ENCODE measurements at regions of chrX and their contacts with region 1.

Region 1: DNA sequence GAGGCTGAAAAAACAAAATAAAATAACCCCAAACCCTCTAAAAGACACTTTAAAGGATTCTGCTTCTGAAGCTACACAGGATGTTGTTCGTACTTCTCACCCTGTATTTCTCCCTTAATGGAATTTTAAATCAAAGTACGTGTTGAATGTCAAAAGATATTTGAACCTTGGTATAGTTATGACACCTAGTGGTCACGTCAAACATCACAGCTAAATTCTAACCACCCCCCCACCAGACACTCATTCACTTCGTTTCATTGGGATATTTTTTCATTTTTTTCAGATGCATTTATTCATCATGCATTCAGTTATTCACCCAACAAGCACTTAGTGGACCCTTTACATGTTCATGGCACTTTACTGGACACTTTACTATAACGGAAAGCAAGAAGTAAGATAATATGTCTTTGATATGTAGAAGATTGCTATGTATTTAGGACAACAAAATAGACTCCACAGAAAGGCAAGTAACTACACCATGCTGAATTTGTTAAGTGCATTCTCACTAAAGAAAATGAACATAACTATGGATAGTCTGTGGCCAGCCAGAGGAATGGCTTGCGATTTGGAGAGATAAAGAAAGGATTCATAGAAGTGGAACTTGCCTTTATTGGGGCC is 62.5 kb upstream of the GPR174 start:
- DNase-seq: peak; percentile 61
- ATAC-seq: peak; percentile 87
- H3K4me3 ChIP-seq: no peak overlapping the region
- H3K27ac ChIP-seq: no peak overlapping the region
- H3K4me1 ChIP-seq: no peaks in the 10 kb centered on the region
- H3K27me3 ChIP-seq: no peaks in the 10 kb centered on the region
- CTCF ChIP-seq: peak; percentile 54 to 82 (median 63); a peak in 5 of 6 replicates
- EP300 ChIP-seq: no peak
- POLR2A ChIP-seq: no peak
- RAD21 ChIP-seq: peak; percentile 83

Region 2: GRCh38 chrX:78455901-78456300 is 626.1 kb before region 1 on chrX:
- CTCF ChIA-PET with region 1: no interaction called
- POLR2A ChIA-PET with region 1: no interaction called
- RAD21 ChIA-PET with region 1: no interaction called
- SMC1A ChIA-PET with region 1: no interaction called
- in situ Hi-C with region 1: no loop called
- intact Hi-C with region 1: no loop called
- DNase-seq: no peak
- ATAC-seq: no peak
- H3K4me3 ChIP-seq: no peak overlapping the region
- H3K27ac ChIP-seq: no peak overlapping the region
- H3K4me1 ChIP-seq: no peaks in the 10 kb centered on the region
- H3K27me3 ChIP-seq: no peaks in the 10 kb centered on the region
- CTCF ChIP-seq: no peak
- EP300 ChIP-seq: no peak
- POLR2A ChIP-seq: no peak
- RAD21 ChIP-seq: no peak

Region 3: GRCh38 chrX:78595901-78596502 is 486.0 kb before region 1 on chrX:
- CTCF ChIA-PET with region 1: interaction called, 39 read pairs
- POLR2A ChIA-PET with region 1: no interaction called
- RAD21 ChIA-PET with region 1: interaction called, 19 read pairs
- SMC1A ChIA-PET with region 1: interaction called, 41 read pairs
- in situ Hi-C with region 1: no loop called
- intact Hi-C with region 1: loop called (anchors 1 kb)
- DNase-seq: no peak
- ATAC-seq: peak; percentile 45; the same call in 2 of the 3 replicates
- H3K4me3 ChIP-seq: no peak overlapping the region
- H3K27ac ChIP-seq: no peak overlapping the region
- H3K4me1 ChIP-seq: no peaks in the 10 kb centered on the region
- H3K27me3 ChIP-seq: no peaks in the 10 kb centered on the region
- CTCF ChIP-seq: peak in 1 of 3 experiments; percentile 18; a peak in 1 of 6 replicates
- EP300 ChIP-seq: no peak
- POLR2A ChIP-seq: no peak
- RAD21 ChIP-seq: peak; percentile 58

Region 4: DNA sequence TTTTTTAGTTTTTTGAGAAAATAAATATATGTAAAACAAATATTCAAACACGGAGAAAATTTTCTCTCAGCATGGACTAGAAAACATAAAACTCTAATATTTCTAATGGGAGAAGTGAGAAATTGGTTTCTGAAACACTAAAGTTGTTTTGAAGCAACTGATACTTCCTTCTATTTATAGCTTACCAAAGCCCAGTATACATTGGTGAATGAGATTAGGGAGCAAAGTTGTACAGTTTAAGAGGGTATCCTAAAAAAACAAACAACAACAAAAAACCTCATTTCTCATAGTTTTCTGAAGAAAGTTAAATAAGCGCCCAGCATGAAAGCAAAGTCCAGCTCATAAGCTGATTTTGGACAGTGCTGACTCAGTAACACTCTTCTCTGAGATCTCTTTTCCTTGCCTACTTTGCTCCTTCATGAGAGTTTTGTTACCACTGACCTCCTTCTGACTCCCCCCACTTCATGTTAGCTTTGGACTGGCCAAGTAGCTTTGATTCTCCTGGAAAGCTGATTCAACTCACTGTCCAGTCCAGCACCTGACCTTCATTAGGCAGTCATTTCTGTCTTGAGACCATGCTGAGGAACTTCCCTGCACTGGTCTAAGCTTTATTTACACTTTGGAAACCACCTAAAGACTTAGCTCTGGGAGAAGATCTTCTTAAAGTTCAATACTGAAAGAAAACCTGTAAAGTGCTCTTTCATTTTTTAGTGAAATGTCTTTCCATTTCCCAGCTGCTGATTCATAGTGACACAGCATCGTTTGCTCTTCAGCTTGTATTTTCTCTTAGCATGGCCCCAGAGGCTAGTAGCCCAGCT is 158.6 kb before region 1 on chrX:
- CTCF ChIA-PET with region 1: interaction called, 6 read pairs
- POLR2A ChIA-PET with region 1: interaction called, 6 read pairs
- RAD21 ChIA-PET with region 1: interaction called, 19 read pairs
- SMC1A ChIA-PET with region 1: interaction called, 33 read pairs
- in situ Hi-C with region 1: no loop called
- intact Hi-C with region 1: no loop called
- DNase-seq: peak; percentile 87
- ATAC-seq: peak; percentile 95
- H3K4me3 ChIP-seq: peak overlapping the region; percentile 49
- H3K27ac ChIP-seq: peak overlapping the region; percentile 99
- H3K4me1 ChIP-seq: peaks cover 9% of the 10 kb centered on the region
- H3K27me3 ChIP-seq: no peaks in the 10 kb centered on the region
- CTCF ChIP-seq: no peak
- EP300 ChIP-seq: peak; percentile 68 to 72; a peak in 2 of 4 replicates
- POLR2A ChIP-seq: no peak; the same call in 1 of the 2 replicates
- RAD21 ChIP-seq: 0 out of 2 replicates have a peak, but pooled peaks have one; percentile 3

Region 5: GRCh38 chrX:79107891-79108718 is 26.1 kb after region 1 on chrX:
- CTCF ChIA-PET with region 1: interaction called, 4 read pairs
- POLR2A ChIA-PET with region 1: no interaction called
- RAD21 ChIA-PET with region 1: interaction called, 27 read pairs
- SMC1A ChIA-PET with region 1: interaction called, 43 read pairs
- in situ Hi-C with region 1: no loop called
- intact Hi-C with region 1: no loop called
- DNase-seq: peak; percentile 55
- ATAC-seq: peak; percentile 91
- H3K4me3 ChIP-seq: no peak overlapping the region
- H3K27ac ChIP-seq: peak overlapping the region; percentile 24
- H3K4me1 ChIP-seq: peaks cover 8% of the 10 kb centered on the region; the same call in 1 of the 2 replicates
- H3K27me3 ChIP-seq: no peaks in the 10 kb centered on the region
- CTCF ChIP-seq: no peak
- EP300 ChIP-seq: peak; percentile 58 to 80; a peak in 2 of 4 replicates
- POLR2A ChIP-seq: no peak
- RAD21 ChIP-seq: no peak

Region 6: GRCh38 chrX:79182616-79183015 is 100.6 kb after region 1 on chrX:
- CTCF ChIA-PET with region 1: no interaction called
- POLR2A ChIA-PET with region 1: no interaction called
- RAD21 ChIA-PET with region 1: interaction called, 11 read pairs
- SMC1A ChIA-PET with region 1: interaction called, 3 read pairs
- in situ Hi-C with region 1: no loop called
- intact Hi-C with region 1: no loop called
- DNase-seq: peak; percentile 84
- ATAC-seq: peak; percentile 93
- H3K4me3 ChIP-seq: no peak overlapping the region
- H3K27ac ChIP-seq: peak overlapping the region; percentile 57
- H3K4me1 ChIP-seq: peaks cover 12% of the 10 kb centered on the region; the same call in 1 of the 2 replicates
- H3K27me3 ChIP-seq: no peaks in the 10 kb centered on the region
- CTCF ChIP-seq: no peak
- EP300 ChIP-seq: peak; percentile 94
- POLR2A ChIP-seq: no peak
- RAD21 ChIP-seq: 0 out of 2 replicates have a peak, but pooled peaks have one; percentile 17

Region 7: GRCh38 chrX:79452881-79453280 is 370.9 kb after region 1 on chrX:
- CTCF ChIA-PET with region 1: interaction called, 8 read pairs
- POLR2A ChIA-PET with region 1: no interaction called
- RAD21 ChIA-PET with region 1: interaction called, 9 read pairs
- SMC1A ChIA-PET with region 1: interaction called, 3 read pairs
- in situ Hi-C with region 1: no loop called
- intact Hi-C with region 1: loop called (anchors 5 kb)
- DNase-seq: no peak
- ATAC-seq: peak; percentile 64
- H3K4me3 ChIP-seq: no peak overlapping the region
- H3K27ac ChIP-seq: no peak overlapping the region
- H3K4me1 ChIP-seq: no peaks in the 10 kb centered on the region
- H3K27me3 ChIP-seq: no peaks in the 10 kb centered on the region
- CTCF ChIP-seq: no peak
- EP300 ChIP-seq: no peak
- POLR2A ChIP-seq: no peak
- RAD21 ChIP-seq: no peak